A673 (cell line): ENCODE measurements at regions of chr2 and their contacts with region 1.

Region 1: DNA sequence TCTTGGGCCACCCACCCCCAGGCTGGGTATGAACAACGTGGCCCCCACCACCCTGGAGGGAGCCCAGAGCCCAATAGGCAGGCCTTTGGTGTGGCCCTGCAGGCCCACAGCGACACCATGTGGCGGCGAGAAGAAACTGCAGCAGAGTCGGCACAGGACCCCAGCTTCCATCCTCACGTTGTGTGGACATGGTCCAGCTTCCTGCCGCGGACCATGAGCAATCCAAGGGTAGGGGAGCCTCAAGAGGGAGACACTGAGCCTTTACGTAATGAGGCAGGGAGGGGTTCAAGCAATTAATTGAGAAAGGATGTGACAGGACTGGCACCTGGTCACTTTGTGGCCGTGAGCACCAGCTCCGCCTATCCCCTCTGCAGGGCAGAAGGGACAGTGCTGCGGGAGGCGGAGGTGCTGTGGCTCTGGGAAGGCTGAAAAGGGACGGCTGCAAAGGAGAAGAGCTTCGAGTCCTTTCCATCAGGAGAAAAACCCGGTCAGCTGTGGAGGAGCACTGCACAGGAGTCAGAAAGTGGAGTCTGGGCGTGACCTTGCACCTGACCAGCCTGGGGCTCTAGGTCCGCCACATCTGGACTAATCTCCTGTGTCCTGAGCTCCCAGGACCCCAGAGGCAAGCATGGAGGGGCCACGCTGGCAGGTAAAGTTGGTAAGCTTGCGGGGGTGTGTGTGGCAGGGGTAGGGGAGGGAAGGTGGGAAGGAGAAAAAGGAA is 44.8 kb downstream of the TMEM37 start:
- DNase-seq: peak; percentile 74
- H3K4me3 ChIP-seq: no peak overlapping the region
- H3K27ac ChIP-seq: no peak overlapping the region
- H3K4me1 ChIP-seq: peaks cover 11% of the 10 kb centered on the region
- H3K27me3 ChIP-seq: no peaks in the 10 kb centered on the region
- CTCF ChIP-seq: peak; percentile 99

Region 2: DNA sequence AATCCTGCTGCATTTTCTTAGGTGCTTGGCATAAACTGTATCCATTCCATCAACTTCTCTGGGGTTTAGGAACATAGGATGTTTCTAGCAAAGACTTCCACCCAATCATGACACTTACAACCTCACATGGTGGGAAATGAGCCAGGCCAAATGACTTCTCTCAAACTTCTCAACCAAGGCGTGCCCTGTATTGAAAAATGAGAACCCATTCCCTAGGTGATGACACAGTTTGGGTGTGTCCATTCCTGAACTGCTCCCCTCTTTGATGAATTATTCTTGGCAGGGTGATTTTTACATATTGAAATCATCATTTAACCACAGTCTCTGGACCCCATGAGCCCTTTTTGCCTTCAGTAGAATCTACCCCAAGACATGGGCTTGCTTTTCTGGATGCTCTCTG is 790.1 kb before region 1 on chr2:
- CTCF ChIA-PET with region 1: no interaction called
- POLR2A ChIA-PET with region 1: no interaction called
- intact Hi-C with region 1: no loop called
- DNase-seq: no peak
- H3K4me3 ChIP-seq: no peak overlapping the region
- H3K27ac ChIP-seq: no peak overlapping the region
- H3K4me1 ChIP-seq: no peaks in the 10 kb centered on the region
- H3K27me3 ChIP-seq: no peaks in the 10 kb centered on the region
- CTCF ChIP-seq: no peak

Region 3: GRCh38 chr2:119234377-119235019 is 242.0 kb before region 1 on chr2:
- CTCF ChIA-PET with region 1: no interaction called
- POLR2A ChIA-PET with region 1: no interaction called
- intact Hi-C with region 1: loop called (anchors 5 kb)
- DNase-seq: peak; percentile 67
- H3K4me3 ChIP-seq: no peak overlapping the region
- H3K27ac ChIP-seq: no peak overlapping the region
- H3K4me1 ChIP-seq: peaks cover 32% of the 10 kb centered on the region
- H3K27me3 ChIP-seq: no peaks in the 10 kb centered on the region
- CTCF ChIP-seq: peak; percentile 68

Region 4: GRCh38 chr2:119387381-119388129 is 88.9 kb before region 1 on chr2:
- CTCF ChIA-PET with region 1: interaction called, 18 read pairs
- POLR2A ChIA-PET with region 1: no interaction called
- intact Hi-C with region 1: no loop called
- DNase-seq: peak; percentile 94
- H3K4me3 ChIP-seq: no peak overlapping the region
- H3K27ac ChIP-seq: peak overlapping the region; percentile 81
- H3K4me1 ChIP-seq: peaks cover 37% of the 10 kb centered on the region
- H3K27me3 ChIP-seq: no peaks in the 10 kb centered on the region
- CTCF ChIP-seq: peak; percentile 59

Region 5: GRCh38 chr2:119407430-119408220 is 68.8 kb before region 1 on chr2:
- CTCF ChIA-PET with region 1: interaction called, 8 read pairs
- POLR2A ChIA-PET with region 1: interaction called, 4 read pairs
- intact Hi-C with region 1: loop called (anchors 1 kb)
- DNase-seq: peak; percentile 87
- H3K4me3 ChIP-seq: no peak overlapping the region
- H3K27ac ChIP-seq: peak overlapping the region; percentile 18
- H3K4me1 ChIP-seq: peaks cover 7% of the 10 kb centered on the region
- H3K27me3 ChIP-seq: no peaks in the 10 kb centered on the region
- CTCF ChIP-seq: peak; percentile 82

Region 6: GRCh38 chr2:119544075-119544938 is 67.8 kb after region 1 on chr2 and contains the start of gene CFAP221:
- CTCF ChIA-PET with region 1: no interaction called
- POLR2A ChIA-PET with region 1: no interaction called
- intact Hi-C with region 1: no loop called
- DNase-seq: peak; percentile 89
- H3K4me3 ChIP-seq: peak within 1 kb of the TSS; percentile 70
- H3K27ac ChIP-seq: peak within 1 kb of the TSS; percentile 93
- H3K4me1 ChIP-seq: peaks cover 4% of the 10 kb centered on the region
- H3K27me3 ChIP-seq: no peaks in the 10 kb centered on the region
- CTCF ChIP-seq: no peak
- total RNA-seq, gene CFAP221: 1.1 and 1.5 TPM in 2 replicates

Region 7: DNA sequence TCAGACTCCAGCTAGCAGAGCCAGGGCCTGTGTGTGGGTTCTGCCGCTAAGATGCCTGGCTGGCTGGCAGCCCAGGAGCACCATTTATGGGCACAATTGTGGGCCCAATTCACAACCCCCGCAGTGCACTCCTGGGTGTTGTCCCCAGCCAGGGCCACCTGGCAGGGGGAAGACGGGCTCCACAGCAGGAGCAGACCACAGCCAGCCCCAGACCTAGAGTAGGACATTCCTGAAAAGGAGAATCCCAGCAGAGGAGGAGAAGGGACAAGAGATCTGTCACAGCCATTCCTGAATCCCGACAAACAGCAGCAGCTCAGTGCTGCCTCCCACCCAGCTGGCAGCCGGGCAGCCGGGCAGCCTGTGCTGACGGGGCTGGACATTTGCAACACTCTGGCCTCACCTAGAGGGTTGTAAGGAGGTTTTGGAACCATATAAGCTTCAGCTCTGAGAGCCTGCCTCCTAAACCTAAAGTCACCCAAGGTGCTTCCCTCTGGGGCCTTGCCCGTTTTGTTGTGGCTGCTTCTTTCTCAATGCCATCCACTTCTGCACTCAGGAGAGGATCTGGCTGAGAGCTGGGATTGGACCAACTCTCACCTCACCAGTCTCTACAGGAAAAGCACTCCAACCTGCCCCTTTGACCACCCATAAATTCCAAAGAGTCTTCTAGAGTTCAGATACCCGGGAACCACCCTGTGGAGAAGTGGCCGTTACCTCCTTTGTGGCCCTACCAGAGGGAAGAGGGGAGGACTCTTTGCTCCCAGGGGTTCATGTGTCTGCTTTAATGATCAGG is 198.4 kb after region 1 on chr2:
- CTCF ChIA-PET with region 1: no interaction called
- POLR2A ChIA-PET with region 1: no interaction called
- intact Hi-C with region 1: no loop called
- DNase-seq: no peak
- H3K4me3 ChIP-seq: no peak overlapping the region
- H3K27ac ChIP-seq: no peak overlapping the region
- H3K4me1 ChIP-seq: peaks cover 2% of the 10 kb centered on the region
- H3K27me3 ChIP-seq: no peaks in the 10 kb centered on the region
- CTCF ChIP-seq: no peak

Region 8: GRCh38 chr2:119943058-119943457 is 466.6 kb after region 1 on chr2:
- CTCF ChIA-PET with region 1: no interaction called
- POLR2A ChIA-PET with region 1: no interaction called
- intact Hi-C with region 1: loop called (anchors 10 kb)
- DNase-seq: no peak
- H3K4me3 ChIP-seq: no peak overlapping the region
- H3K27ac ChIP-seq: no peak overlapping the region
- H3K4me1 ChIP-seq: no peaks in the 10 kb centered on the region
- H3K27me3 ChIP-seq: no peaks in the 10 kb centered on the region
- CTCF ChIP-seq: no peak